CD14-positive monocyte (primary cell): ENCODE measurements at regions of chr13 and their contacts with region 1.

Region 1: DNA sequence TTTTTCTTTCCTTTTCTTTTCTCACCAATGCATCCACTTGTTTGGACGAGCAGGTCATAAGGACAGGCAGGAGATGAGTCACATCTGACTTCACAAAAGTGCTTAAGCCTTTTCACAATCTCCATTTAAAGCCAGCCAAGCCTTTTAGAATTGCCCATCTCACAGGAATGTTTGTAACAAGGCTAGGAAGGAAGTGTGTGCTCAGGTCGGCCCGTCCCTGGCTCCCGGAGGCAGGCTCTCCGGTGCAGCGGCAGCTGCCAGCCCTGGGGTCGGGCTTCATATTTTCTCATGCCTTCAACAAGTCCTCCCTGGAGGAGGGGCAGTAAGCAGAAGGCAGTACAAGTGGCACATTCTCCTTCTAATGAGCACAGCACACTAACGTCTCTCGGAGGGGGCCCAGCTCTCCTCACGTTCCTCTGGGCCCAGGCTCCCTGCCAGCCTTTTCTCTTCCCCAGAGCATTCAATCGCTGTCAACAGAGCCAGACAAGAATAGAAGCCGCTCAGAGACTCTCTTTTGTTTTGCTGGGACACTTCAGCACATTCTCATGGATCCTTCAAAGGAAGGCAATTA is 180.5 kb downstream of the COL4A1 start:
- DNase-seq: peak in 2 of 3 donors; percentile 26 to 50
- H3K4me3 ChIP-seq: no peak overlapping the region
- H3K4me3 Mint-ChIP-seq: peak overlapping the region in 1 of 2 donors; percentile 64
- H3K27ac ChIP-seq: no peak overlapping the region
- H3K27ac Mint-ChIP-seq: peak overlapping the region in 2 of 7 donors; percentile 32 to 69
- H3K4me1 ChIP-seq: peaks cover 0 to 13% of the 10 kb centered on the region in 2 donors
- H3K4me1 Mint-ChIP-seq: peaks cover 9% of the 10 kb centered on the region
- H3K27me3 ChIP-seq: peaks cover 2 to 6% of the 10 kb centered on the region in 2 donors
- H3K27me3 Mint-ChIP-seq: peaks cover 18 to 44% (median 21%) of the 10 kb centered on the region in 3 donors
- CTCF ChIP-seq: no peak

Region 2: GRCh38 chr13:109938255-109938936 is 188.1 kb before region 1 on chr13:
- intact Hi-C with region 1: no loop called
- DNase-seq: no peak
- H3K4me3 ChIP-seq: no peak overlapping the region
- H3K4me3 Mint-ChIP-seq: no peak overlapping the region
- H3K27ac ChIP-seq: no peak overlapping the region
- H3K27ac Mint-ChIP-seq: no peak overlapping the region
- H3K4me1 ChIP-seq: no peaks in the 10 kb centered on the region
- H3K4me1 Mint-ChIP-seq: no peaks in the 10 kb centered on the region
- H3K27me3 ChIP-seq: no peaks in the 10 kb centered on the region
- H3K27me3 Mint-ChIP-seq: no peaks in the 10 kb centered on the region
- CTCF ChIP-seq: no peak

Region 3: GRCh38 chr13:110173247-110173818 is 46.9 kb after region 1 on chr13:
- intact Hi-C with region 1: loop called in 1 of 2 experiments (anchors 10 kb)
- DNase-seq: peak in 2 of 3 donors; percentile 14 to 19
- H3K4me3 ChIP-seq: no peak overlapping the region
- H3K4me3 Mint-ChIP-seq: no peak overlapping the region
- H3K27ac ChIP-seq: no peak overlapping the region
- H3K27ac Mint-ChIP-seq: no peak overlapping the region
- H3K4me1 ChIP-seq: peaks cover 0 to 7% of the 10 kb centered on the region in 2 donors
- H3K4me1 Mint-ChIP-seq: no peaks in the 10 kb centered on the region
- H3K27me3 ChIP-seq: no peaks in the 10 kb centered on the region
- H3K27me3 Mint-ChIP-seq: peaks cover 1 to 5% (median 4%) of the 10 kb centered on the region in 3 donors
- CTCF ChIP-seq: no peak